ENCODE measurements at regions of chr16 and their contacts with region 1.

Region 1: GRCh38 chr16:29645694-29646187 is 17.3 kb upstream of the SPN start:
- DNase-seq: peak; percentile 83
- ATAC-seq: peak; percentile 77
- H3K4me3 ChIP-seq: no peak overlapping the region
- H3K27ac ChIP-seq: peak overlapping the region; percentile 90
- H3K4me1 ChIP-seq: peaks cover 45% of the 10 kb centered on the region
- H3K27me3 ChIP-seq: no peaks in the 10 kb centered on the region
- CTCF ChIP-seq: no peak
- EP300 ChIP-seq: no peak
- POLR2A ChIP-seq: peak; percentile 52
- RAD21 ChIP-seq: no peak

Region 2: DNA sequence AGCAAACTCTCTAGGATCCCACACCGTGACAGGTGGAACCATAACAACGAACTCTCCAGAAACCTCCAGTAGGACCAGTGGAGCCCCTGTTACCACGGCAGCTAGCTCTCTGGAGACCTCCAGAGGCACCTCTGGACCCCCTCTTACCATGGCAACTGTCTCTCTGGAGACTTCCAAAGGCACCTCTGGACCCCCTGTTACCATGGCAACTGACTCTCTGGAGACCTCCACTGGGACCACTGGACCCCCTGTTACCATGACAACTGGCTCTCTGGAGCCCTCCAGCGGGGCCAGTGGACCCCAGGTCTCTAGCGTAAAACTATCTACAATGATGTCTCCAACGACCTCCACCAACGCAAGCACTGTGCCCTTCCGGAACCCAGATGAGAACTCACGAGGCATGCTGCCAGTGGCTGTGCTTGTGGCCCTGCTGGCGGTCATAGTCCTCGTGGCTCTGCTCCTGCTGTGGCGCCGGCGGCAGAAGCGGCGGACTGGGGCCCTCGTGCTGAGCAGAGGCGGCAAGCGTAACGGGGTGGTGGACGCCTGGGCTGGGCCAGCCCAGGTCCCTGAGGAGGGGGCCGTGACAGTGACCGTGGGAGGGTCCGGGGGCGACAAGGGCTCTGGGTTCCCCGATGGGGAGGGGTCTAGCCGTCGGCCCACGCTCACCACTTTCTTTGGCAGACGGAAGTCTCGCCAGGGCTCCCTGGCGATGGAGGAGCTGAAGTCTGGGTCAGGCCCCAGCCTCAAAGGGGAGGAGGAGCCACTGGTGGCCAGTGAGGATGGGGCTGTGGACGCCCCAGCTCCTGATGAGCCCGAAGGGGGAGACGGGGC is 18.6 kb after region 1 on chr16:
- CTCF ChIA-PET with region 1: interaction called, 25 read pairs
- POLR2A ChIA-PET with region 1: interaction called, 62 read pairs
- RAD21 ChIA-PET with region 1: interaction called, 98 read pairs
- SMC1A ChIA-PET with region 1: interaction called, 51 read pairs
- in situ Hi-C with region 1: no loop called
- intact Hi-C with region 1: loop called (anchors 1 kb)
- DNase-seq: no peak
- ATAC-seq: peak; percentile 20
- H3K4me3 ChIP-seq: peak overlapping the region; percentile 99
- H3K27ac ChIP-seq: peak overlapping the region; percentile 81
- H3K4me1 ChIP-seq: peaks cover 12% of the 10 kb centered on the region
- H3K27me3 ChIP-seq: no peaks in the 10 kb centered on the region
- CTCF ChIP-seq: peak; percentile 17 to 23 (median 17); a peak in 2 of 6 replicates
- EP300 ChIP-seq: no peak
- POLR2A ChIP-seq: peak; percentile 71
- RAD21 ChIP-seq: no peak

Region 3: GRCh38 chr16:29678691-29679267 is 33.0 kb after region 1 on chr16 and contains the start of gene QPRT:
- CTCF ChIA-PET with region 1: interaction called, 4 read pairs
- POLR2A ChIA-PET with region 1: interaction called, 13 read pairs
- RAD21 ChIA-PET with region 1: interaction called, 8 read pairs
- SMC1A ChIA-PET with region 1: interaction called, 22 read pairs
- in situ Hi-C with region 1: no loop called
- intact Hi-C with region 1: loop called (anchors 5 kb)
- DNase-seq: no peak
- ATAC-seq: peak; percentile 82
- H3K4me3 ChIP-seq: peak within 1 kb of the TSS; percentile 84
- H3K27ac ChIP-seq: peak within 1 kb of the TSS; percentile 85
- H3K4me1 ChIP-seq: peaks cover 8% of the 10 kb centered on the region; the same call in 1 of the 2 replicates
- H3K27me3 ChIP-seq: no peaks in the 10 kb centered on the region
- CTCF ChIP-seq: no peak
- EP300 ChIP-seq: no peak
- POLR2A ChIP-seq: peak; percentile 67
- RAD21 ChIP-seq: no peak
- polyA plus RNA-seq, gene QPRT: 2.7 to 6.9 TPM

Region 4: GRCh38 chr16:29694384-29695195 is 48.8 kb after region 1 on chr16:
- CTCF ChIA-PET with region 1: interaction called, 27 read pairs
- POLR2A ChIA-PET with region 1: no interaction called
- RAD21 ChIA-PET with region 1: interaction called, 3 read pairs
- SMC1A ChIA-PET with region 1: interaction called, 6 read pairs
- in situ Hi-C with region 1: no loop called
- intact Hi-C with region 1: no loop called
- DNase-seq: no peak
- ATAC-seq: peak; percentile 44
- H3K4me3 ChIP-seq: no peak overlapping the region
- H3K27ac ChIP-seq: no peak overlapping the region
- H3K4me1 ChIP-seq: peaks cover 7% of the 10 kb centered on the region
- H3K27me3 ChIP-seq: no peaks in the 10 kb centered on the region
- CTCF ChIP-seq: no peak
- EP300 ChIP-seq: no peak
- POLR2A ChIP-seq: no peak
- RAD21 ChIP-seq: no peak

Region 5: GRCh38 chr16:29710227-29711219 is 64.8 kb after region 1 on chr16:
- CTCF ChIA-PET with region 1: interaction called, 11 read pairs
- POLR2A ChIA-PET with region 1: interaction called, 3 read pairs
- RAD21 ChIA-PET with region 1: interaction called, 4 read pairs
- SMC1A ChIA-PET with region 1: interaction called, 6 read pairs
- in situ Hi-C with region 1: no loop called
- intact Hi-C with region 1: no loop called
- DNase-seq: no peak
- ATAC-seq: peak; percentile 94
- H3K4me3 ChIP-seq: no peak overlapping the region
- H3K27ac ChIP-seq: no peak overlapping the region
- H3K4me1 ChIP-seq: peaks cover 9% of the 10 kb centered on the region
- H3K27me3 ChIP-seq: no peaks in the 10 kb centered on the region; a peak in 1 of 4 replicates
- CTCF ChIP-seq: peak; percentile 52 to 75 (median 58); a peak in 5 of 6 replicates
- EP300 ChIP-seq: no peak
- POLR2A ChIP-seq: no peak
- RAD21 ChIP-seq: peak; percentile 53

Region 6: DNA sequence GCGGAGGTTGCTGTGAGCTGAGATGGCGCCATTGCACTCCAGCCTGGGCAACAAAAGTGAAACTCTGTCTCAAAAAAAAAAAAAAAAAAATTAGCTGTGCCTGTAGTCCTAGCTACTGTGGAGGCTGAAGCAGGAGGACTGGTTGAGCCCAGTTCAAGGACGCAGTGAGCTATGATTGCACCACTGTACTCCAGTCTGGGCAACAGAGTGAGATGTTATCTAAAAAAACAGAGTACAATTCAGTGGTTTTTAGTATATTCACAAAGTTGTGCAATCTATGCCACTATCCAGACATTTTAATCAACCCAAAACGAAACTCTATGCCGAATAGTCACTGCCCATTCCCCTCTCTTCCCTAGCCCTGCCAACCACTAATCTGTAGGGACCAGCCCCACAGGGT is 75.0 kb after region 1 on chr16:
- CTCF ChIA-PET with region 1: interaction called, 20 read pairs
- POLR2A ChIA-PET with region 1: interaction called, 3 read pairs
- RAD21 ChIA-PET with region 1: interaction called, 12 read pairs
- SMC1A ChIA-PET with region 1: interaction called, 5 read pairs
- in situ Hi-C with region 1: no loop called
- intact Hi-C with region 1: no loop called
- DNase-seq: no peak
- ATAC-seq: no peak
- H3K4me3 ChIP-seq: no peak overlapping the region
- H3K27ac ChIP-seq: no peak overlapping the region
- H3K4me1 ChIP-seq: no peaks in the 10 kb centered on the region; the same call in 1 of the 2 replicates
- H3K27me3 ChIP-seq: no peaks in the 10 kb centered on the region
- CTCF ChIP-seq: no peak
- EP300 ChIP-seq: no peak
- POLR2A ChIP-seq: no peak
- RAD21 ChIP-seq: no peak